Activated CD8-positive, alpha-beta T cell treated with anti-CD3 and anti-CD28 coated beads, Interleukin-2, amount 10 ng/mL, durations not matched to agents 7 days and 5 days (primary cell): ENCODE measurements at regions of chr11 and their contacts with region 1.

Region 1: GRCh38 chr11:43852057-43852636 is 28.5 kb upstream of the ALKBH3 start:
- DNase-seq: peak; percentile 75
- ATAC-seq: peak; percentile 79
- H3K4me3 Mint-ChIP-seq: no peak overlapping the region
- H3K27ac Mint-ChIP-seq: no peak overlapping the region
- H3K4me1 Mint-ChIP-seq: peaks cover 8% of the 10 kb centered on the region
- H3K27me3 Mint-ChIP-seq: no peaks in the 10 kb centered on the region

Region 2: GRCh38 chr11:43573233-43573632 is 278.9 kb before region 1 on chr11:
- CTCF ChIA-PET with region 1: interaction called, 20 read pairs
- POLR2A ChIA-PET with region 1: no interaction called
- DNase-seq: peak; percentile 39
- ATAC-seq: no peak
- H3K4me3 Mint-ChIP-seq: no peak overlapping the region
- H3K27ac Mint-ChIP-seq: no peak overlapping the region
- H3K4me1 Mint-ChIP-seq: peaks cover 30% of the 10 kb centered on the region
- H3K27me3 Mint-ChIP-seq: peaks cover 80% of the 10 kb centered on the region

Region 3: GRCh38 chr11:43825217-43825816 is 26.8 kb before region 1 on chr11:
- CTCF ChIA-PET with region 1: interaction called, 32 read pairs
- POLR2A ChIA-PET with region 1: no interaction called
- DNase-seq: peak; percentile 27
- ATAC-seq: no peak
- H3K4me3 Mint-ChIP-seq: no peak overlapping the region
- H3K27ac Mint-ChIP-seq: no peak overlapping the region
- H3K4me1 Mint-ChIP-seq: peaks cover 1% of the 10 kb centered on the region
- H3K27me3 Mint-ChIP-seq: no peaks in the 10 kb centered on the region

Region 4: DNA sequence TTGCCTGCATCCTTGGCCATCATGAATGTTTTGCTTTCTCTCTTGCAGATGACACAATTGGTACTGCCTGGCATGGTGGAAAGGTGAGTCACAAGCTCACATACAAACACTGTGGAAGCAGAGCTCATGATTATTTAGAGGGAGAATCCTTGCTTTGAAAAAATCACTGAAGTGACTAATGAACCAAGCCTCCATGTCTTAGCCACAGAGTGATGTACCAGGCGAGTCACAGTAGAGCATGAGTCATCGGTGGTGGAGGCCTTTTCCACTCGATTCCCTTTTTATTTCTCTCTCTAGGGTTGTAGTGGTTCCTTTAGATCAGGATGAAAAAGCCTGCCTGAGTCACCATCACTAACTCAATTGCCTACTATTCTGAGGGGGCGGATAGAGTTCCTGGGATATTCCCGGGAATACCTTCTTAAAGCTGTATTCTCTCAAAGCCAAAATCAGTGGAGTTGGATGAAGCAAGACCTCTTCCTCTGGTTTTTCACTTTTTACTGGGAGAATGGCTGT is 21.2 kb before region 1 on chr11:
- CTCF ChIA-PET with region 1: interaction called, 32 read pairs
- POLR2A ChIA-PET with region 1: no interaction called
- DNase-seq: peak; percentile 29
- ATAC-seq: peak; percentile 79
- H3K4me3 Mint-ChIP-seq: no peak overlapping the region
- H3K27ac Mint-ChIP-seq: no peak overlapping the region
- H3K4me1 Mint-ChIP-seq: peaks cover 9% of the 10 kb centered on the region
- H3K27me3 Mint-ChIP-seq: no peaks in the 10 kb centered on the region

Region 5: GRCh38 chr11:43837879-43838278 is 14.3 kb before region 1 on chr11:
- CTCF ChIA-PET with region 1: interaction called, 16 read pairs
- POLR2A ChIA-PET with region 1: no interaction called
- DNase-seq: no peak
- ATAC-seq: no peak
- H3K4me3 Mint-ChIP-seq: no peak overlapping the region
- H3K27ac Mint-ChIP-seq: no peak overlapping the region
- H3K4me1 Mint-ChIP-seq: no peaks in the 10 kb centered on the region
- H3K27me3 Mint-ChIP-seq: no peaks in the 10 kb centered on the region

Region 6: DNA sequence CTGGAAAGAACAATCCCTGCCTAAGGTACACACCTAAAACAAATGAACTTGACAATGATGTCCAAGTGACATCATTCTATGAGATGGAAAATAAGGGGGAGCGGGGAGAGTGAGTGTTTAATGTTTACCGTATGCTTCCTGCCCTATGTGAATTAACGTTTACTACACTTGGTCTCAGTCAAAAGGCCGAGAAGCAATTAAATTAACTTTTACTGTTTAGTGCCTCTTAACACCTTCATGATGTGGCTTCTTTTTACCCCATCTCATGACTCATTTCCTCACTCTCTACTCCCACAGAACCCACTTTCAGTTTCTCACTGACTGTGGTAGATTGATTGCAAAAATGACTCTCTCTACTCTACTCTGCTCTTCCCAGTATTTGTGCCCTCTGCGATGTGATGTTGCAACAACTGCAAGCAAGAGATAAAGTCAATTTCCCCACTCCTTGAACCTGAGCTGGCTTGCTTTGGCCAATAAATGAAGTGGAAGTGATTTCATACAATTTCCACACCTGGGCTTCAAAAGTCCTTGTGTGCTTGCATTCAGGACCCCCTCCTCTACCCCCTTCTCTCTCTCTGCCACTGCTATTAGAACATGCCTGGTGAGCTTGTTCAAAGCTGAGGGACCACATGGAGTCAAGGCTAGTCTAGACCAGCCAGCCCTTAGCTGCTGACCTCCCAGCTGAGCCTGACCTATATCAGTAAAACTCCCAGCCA is 16.9 kb after region 1 on chr11:
- CTCF ChIA-PET with region 1: interaction called, 14 read pairs
- POLR2A ChIA-PET with region 1: no interaction called
- DNase-seq: peak; percentile 75
- ATAC-seq: peak; percentile 98
- H3K4me3 Mint-ChIP-seq: peak overlapping the region; percentile 44
- H3K27ac Mint-ChIP-seq: peak overlapping the region; percentile 89
- H3K4me1 Mint-ChIP-seq: peaks cover 37% of the 10 kb centered on the region
- H3K27me3 Mint-ChIP-seq: peaks cover 43% of the 10 kb centered on the region